Activated naive CD4-positive, alpha-beta T cell treated with anti-CD3 and anti-CD28 coated beads for 36 hours (primary cell): ENCODE measurements at regions of chr10 and their contacts with region 1.

Region 1: DNA sequence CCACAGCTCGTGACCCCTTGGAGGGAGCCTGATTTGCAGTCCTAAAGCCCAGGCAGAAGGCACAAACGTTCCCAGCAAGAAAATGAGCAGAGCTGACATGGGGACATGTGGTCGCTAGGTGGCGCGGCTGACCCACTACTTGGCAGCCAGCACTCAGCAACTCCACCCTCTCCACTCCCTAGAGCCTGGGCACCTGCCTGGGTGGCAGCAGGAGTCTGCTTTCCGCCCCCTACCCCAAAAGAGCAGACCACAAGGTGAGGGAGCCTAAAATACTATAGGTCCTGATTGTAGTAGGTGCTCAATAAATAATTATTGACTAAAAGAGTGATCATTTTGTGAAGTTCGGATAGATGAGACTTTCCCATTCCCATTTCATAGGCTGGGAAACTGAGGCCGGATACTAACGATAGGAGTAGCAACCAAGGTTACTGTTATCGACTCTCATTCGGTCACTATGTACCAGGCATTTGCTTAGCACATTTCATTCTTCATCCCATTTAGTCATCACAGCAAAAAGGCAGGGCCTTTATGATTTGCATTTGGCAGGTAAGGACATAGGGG is 57.4 kb downstream of the NEUROG3 start:
- DNase-seq: peak; percentile 87
- H3K4me3 Mint-ChIP-seq: no peak overlapping the region
- H3K27ac Mint-ChIP-seq: no peak overlapping the region
- H3K4me1 Mint-ChIP-seq: no peaks in the 10 kb centered on the region
- H3K27me3 Mint-ChIP-seq: no peaks in the 10 kb centered on the region

Region 2: GRCh38 chr10:68988530-68989316 is 527.1 kb before region 1 on chr10 and contains the start of gene KIFBP:
- CTCF ChIA-PET with region 1: no interaction called
- intact Hi-C with region 1: no loop called
- DNase-seq: peak; percentile 94
- H3K4me3 Mint-ChIP-seq: peak within 1 kb of the TSS; percentile 98
- H3K27ac Mint-ChIP-seq: peak within 1 kb of the TSS; percentile 92
- H3K4me1 Mint-ChIP-seq: peaks cover 44% of the 10 kb centered on the region
- H3K27me3 Mint-ChIP-seq: no peaks in the 10 kb centered on the region
- total RNA-seq, gene KIFBP: 10.1 to 10.6 TPM

Region 3: GRCh38 chr10:69360485-69361324 is 155.1 kb before region 1 on chr10:
- CTCF ChIA-PET with region 1: no interaction called
- intact Hi-C with region 1: no loop called
- DNase-seq: no peak
- H3K4me3 Mint-ChIP-seq: no peak overlapping the region
- H3K27ac Mint-ChIP-seq: no peak overlapping the region
- H3K4me1 Mint-ChIP-seq: peaks cover 53% of the 10 kb centered on the region
- H3K27me3 Mint-ChIP-seq: no peaks in the 10 kb centered on the region

Region 4: GRCh38 chr10:69527961-69528360 is 12.2 kb after region 1 on chr10:
- CTCF ChIA-PET with region 1: interaction called, 10 read pairs
- intact Hi-C with region 1: no loop called
- DNase-seq: no peak
- H3K4me3 Mint-ChIP-seq: no peak overlapping the region
- H3K27ac Mint-ChIP-seq: no peak overlapping the region
- H3K4me1 Mint-ChIP-seq: no peaks in the 10 kb centered on the region
- H3K27me3 Mint-ChIP-seq: no peaks in the 10 kb centered on the region

Region 5: GRCh38 chr10:69541463-69541862 is 25.7 kb after region 1 on chr10:
- CTCF ChIA-PET with region 1: no interaction called
- intact Hi-C with region 1: no loop called
- DNase-seq: no peak
- H3K4me3 Mint-ChIP-seq: no peak overlapping the region
- H3K27ac Mint-ChIP-seq: no peak overlapping the region
- H3K4me1 Mint-ChIP-seq: no peaks in the 10 kb centered on the region
- H3K27me3 Mint-ChIP-seq: peaks cover 2% of the 10 kb centered on the region

Region 6: DNA sequence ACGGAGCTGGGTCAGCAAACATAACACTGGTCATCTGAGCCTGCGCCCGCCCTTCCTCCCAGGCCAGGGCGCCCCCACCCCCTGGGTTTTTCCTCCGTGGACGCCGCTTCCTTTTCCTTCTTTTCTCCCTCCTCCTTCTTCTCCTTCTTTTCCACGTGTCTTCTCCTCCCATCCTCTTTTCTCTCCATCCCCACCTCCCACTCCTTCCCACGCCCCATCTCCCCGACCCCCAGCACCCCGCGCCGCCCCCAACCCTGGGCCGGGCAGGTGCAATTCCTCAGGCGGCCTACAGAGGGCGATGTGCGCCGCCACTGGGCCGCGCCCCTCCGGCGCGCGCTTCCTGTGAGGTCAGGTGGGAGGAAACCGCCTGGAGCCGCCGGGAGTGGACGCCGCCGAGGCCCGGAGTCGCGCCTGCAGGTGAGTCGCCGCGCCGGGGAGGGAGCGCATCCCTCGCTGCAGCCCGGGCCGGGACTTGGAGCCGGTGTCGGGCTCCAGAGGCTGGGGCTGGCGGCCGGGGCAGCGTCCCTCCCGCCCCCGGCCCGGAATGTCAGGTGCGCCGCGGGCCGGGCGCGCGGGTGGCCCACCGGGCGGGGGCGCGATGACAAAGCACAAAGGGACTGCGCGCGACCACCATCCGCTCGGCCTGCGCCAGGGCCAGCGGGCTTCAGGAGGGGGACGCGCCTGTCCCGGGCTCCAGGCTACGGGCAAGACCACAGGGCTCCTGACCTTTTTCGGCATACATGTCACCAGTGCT is 114.3 kb after region 1 on chr10 and contains the start of gene FAM241B:
- CTCF ChIA-PET with region 1: interaction called, 322 read pairs
- intact Hi-C with region 1: no loop called
- DNase-seq: peak; percentile 85
- H3K4me3 Mint-ChIP-seq: peak within 1 kb of the TSS; percentile 72
- H3K27ac Mint-ChIP-seq: no peak within 1 kb of the TSS
- H3K4me1 Mint-ChIP-seq: peaks cover 5% of the 10 kb centered on the region
- H3K27me3 Mint-ChIP-seq: no peaks in the 10 kb centered on the region
- total RNA-seq, gene FAM241B: 11.1 to 12.3 TPM

Region 7: DNA sequence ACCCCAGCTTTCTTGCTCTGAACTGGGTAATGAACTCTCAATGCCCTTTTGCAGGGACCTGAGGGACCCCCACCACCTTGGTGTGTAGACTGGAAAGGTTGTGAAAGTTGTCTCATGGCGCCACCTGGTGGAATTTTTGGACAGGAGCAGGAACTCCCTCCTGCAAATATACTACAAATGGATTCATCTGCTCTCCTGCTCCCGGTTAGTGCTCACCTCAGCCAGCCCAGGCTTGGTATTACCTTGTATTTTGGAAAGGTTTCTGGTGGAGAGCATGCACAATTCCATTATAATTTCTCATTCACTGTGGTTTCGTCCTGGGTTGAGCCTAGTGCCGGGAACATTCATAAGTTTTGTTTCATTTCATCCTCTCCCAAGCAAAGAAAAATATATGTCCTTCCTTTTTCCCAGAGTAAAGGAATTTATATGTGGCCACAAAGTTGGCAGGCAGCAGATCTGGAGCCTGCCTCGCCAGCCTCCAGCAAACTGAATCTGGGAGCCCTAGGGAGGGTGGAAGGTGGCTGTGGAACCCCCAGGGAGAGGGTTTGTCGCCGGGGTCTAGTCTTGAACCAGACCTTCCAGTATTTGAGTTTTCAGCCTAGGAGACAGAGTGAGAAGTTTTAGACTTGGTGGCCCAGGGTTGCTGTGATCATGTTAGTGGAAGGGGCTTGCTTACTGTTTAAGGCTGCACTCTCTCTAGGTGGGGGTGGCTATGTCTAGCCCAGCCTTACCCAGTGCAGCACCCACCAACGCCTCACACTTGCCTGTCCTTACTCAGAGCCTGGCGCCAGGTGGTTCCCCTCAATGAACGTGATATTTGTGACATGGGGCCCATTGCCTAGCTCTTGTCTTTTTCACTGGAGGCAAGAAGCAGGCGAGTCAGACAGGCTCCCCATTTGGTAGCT is 123.8 kb after region 1 on chr10:
- CTCF ChIA-PET with region 1: interaction called, 322 read pairs
- intact Hi-C with region 1: loop called (anchors 1 kb)
- DNase-seq: peak; percentile 80
- H3K4me3 Mint-ChIP-seq: no peak overlapping the region
- H3K27ac Mint-ChIP-seq: no peak overlapping the region
- H3K4me1 Mint-ChIP-seq: no peaks in the 10 kb centered on the region
- H3K27me3 Mint-ChIP-seq: peaks cover 1% of the 10 kb centered on the region

Region 8: DNA sequence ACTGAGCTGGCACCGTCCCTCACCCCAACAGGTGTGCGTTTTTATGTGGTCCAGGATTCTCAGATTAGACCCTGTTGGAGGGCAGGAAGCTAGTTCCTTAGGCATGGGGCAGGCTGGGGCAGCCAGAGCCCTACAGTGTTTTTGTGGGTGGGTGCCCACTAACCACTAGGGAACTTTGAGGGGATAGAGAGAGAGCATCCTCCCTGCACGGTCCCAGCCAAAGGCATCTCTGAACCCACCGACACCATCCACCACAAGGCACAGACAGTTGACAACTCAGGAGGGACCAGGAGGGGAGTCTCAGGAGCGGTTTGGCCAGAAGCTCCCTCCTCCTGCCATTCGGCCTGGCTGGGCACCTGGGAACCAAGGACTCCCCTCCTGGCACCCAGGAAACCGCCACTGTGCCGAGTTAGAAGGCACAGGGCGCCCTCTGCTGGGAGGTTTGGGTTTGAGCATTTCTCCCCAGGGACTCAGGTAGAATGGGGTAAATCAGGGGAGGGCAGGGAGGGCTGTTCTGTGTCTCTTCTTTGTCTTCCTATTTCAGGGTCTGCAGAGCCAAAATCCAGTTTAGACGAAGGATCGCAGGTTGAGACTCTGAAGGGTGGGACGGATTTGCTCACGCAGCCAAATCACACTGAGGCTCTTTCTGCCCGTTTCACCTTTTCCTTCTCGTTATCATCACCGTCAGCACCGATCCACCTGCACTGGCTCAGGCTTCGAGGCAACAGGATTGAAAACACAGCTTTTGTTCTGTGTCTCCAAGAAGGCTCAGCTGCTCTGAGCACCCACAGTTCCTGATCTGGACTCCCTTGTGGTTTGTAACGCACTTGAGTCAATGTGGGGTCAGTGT is 201.2 kb after region 1 on chr10:
- CTCF ChIA-PET with region 1: interaction called, 18 read pairs
- intact Hi-C with region 1: loop called (anchors 1 kb)
- DNase-seq: peak; percentile 78
- H3K4me3 Mint-ChIP-seq: no peak overlapping the region
- H3K27ac Mint-ChIP-seq: no peak overlapping the region
- H3K4me1 Mint-ChIP-seq: no peaks in the 10 kb centered on the region
- H3K27me3 Mint-ChIP-seq: no peaks in the 10 kb centered on the region

Region 9: GRCh38 chr10:69800109-69800508 is 284.3 kb after region 1 on chr10:
- CTCF ChIA-PET with region 1: no interaction called
- intact Hi-C with region 1: loop called (anchors 10 kb)
- DNase-seq: peak; percentile 37
- H3K4me3 Mint-ChIP-seq: no peak overlapping the region
- H3K27ac Mint-ChIP-seq: no peak overlapping the region
- H3K4me1 Mint-ChIP-seq: peaks cover 9% of the 10 kb centered on the region
- H3K27me3 Mint-ChIP-seq: peaks cover 41% of the 10 kb centered on the region

Region 10: DNA sequence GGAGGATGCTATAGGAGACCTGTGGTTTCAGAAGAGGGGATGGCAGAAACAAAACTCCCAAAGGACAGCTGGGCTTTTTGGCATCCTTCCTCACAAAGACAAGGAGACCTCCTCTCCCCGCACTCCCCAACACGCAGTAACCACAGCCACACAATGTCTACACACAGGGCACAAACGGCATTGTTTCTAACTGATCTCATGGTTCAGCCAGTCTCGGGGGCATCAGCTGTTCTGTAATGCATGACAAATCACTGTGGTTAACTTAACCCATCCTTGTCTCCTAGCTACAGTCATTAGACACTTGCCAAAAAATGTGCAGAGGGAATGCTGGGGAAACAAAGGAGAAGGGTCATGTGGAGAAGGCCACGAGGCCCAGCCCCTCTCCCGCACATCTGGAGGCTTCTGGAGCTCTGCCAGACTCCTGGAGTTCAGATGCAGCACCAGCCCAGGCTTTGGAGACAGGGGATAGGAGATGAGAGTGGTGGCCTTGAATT is 1149.0 kb after region 1 on chr10:
- CTCF ChIA-PET with region 1: no interaction called
- intact Hi-C with region 1: no loop called
- DNase-seq: no peak
- H3K4me3 Mint-ChIP-seq: no peak overlapping the region
- H3K27ac Mint-ChIP-seq: no peak overlapping the region
- H3K4me1 Mint-ChIP-seq: no peaks in the 10 kb centered on the region
- H3K27me3 Mint-ChIP-seq: no peaks in the 10 kb centered on the region